Activated CD8-positive, alpha-beta T cell treated with anti-CD3 and anti-CD28 coated beads, Interleukin-2, amount 10 ng/mL, durations not matched to agents 7 days and 5 days (primary cell): ENCODE measurements at regions of chr3 and their contacts with region 1.

Region 1: DNA sequence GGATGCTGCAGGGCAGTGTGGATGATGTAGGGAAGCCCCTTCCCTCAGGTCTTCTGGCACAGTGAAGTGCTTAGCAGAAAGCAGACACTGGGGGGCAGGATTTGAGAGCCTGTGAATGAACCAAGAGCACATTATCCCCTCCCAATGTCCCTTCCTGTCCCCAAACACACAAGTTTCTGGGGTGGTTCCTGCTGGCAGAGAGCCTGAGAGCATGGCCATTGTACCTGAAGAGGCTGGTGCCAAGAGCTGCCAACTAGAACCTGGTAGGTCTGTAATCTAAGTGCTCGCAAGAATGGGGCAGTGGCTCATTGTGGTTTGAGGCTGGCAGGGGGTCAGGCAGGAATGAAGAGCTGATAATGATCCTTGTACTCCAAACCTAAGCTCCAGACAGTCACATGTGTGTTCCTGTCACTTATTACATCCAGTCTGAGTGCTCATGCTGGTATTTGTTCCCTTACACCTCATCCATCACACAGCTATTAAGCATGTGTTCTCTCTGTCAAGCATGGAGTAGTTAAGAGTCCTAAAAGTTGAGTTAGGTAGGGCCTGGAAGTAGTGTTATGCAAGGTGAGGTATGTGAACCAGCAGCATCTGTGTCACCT is 6.7 kb upstream of the CCR1 start:
- DNase-seq: peak; percentile 64
- ATAC-seq: peak; percentile 13
- H3K4me3 Mint-ChIP-seq: no peak overlapping the region
- H3K27ac Mint-ChIP-seq: no peak overlapping the region
- H3K4me1 Mint-ChIP-seq: peaks cover 32% of the 10 kb centered on the region
- H3K27me3 Mint-ChIP-seq: no peaks in the 10 kb centered on the region

Region 2: DNA sequence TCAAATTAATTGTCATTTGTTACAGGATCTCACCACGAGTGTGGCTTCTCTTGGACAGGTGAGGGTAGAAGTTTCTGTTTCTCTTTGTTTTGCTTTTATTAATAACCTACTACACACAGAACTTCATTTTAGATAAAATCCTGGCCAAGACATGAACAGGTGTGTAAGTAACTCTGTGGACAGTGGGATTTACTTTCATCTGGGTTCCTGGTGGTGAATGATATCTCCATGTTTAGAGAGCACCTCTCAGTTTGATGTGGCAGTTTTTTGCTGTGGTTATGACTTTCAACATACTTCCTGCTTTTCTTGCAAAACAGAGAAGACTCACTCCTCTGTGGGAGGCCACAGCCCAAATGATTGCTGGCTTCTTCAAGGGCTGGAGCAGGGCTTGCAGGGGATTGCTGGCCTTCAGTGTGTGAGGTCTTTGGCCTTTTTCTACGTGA is 116.5 kb before region 1 on chr3:
- CTCF ChIA-PET with region 1: interaction called, 150 read pairs
- POLR2A ChIA-PET with region 1: interaction called, 6 read pairs
- DNase-seq: peak; percentile 80
- ATAC-seq: peak; percentile 72
- H3K4me3 Mint-ChIP-seq: peak overlapping the region; percentile 63
- H3K27ac Mint-ChIP-seq: peak overlapping the region; percentile 99
- H3K4me1 Mint-ChIP-seq: peaks cover 92% of the 10 kb centered on the region
- H3K27me3 Mint-ChIP-seq: no peaks in the 10 kb centered on the region

Region 3: DNA sequence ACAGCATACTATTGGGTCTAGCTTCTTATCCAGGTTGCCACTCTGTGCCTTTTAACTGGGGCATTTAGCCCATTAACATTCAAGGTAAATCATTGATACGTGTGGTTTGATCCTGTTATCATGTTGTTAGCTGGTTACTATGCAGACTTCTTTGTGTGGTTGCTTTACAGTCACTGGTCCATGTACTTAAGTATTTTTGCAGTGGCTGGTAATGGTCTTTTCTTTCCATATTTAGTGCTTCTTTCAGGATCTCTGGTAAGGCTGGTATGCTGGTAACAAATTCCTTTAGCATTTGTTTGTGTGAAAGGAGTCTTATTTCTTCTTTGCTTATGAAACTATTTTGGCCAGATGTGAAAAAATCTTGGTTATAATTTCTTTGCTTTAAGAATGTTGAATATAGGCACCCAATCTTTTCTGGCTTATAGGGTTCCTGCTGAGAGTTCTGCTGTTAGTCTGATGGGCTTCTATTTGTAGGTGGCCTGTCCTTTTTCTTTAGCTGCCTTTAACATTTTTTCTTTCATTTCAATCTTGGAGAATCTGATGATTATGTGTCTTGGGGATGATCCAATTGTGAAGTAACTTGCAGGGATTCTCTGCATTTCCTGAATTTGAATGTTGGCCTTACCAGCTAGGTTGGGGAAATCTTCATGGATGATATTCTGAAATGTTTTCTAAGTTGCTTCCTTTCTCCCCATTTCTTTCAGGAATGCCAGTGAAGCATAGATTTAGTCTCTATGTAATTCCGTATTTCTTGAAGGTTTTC is 46.1 kb before region 1 on chr3:
- CTCF ChIA-PET with region 1: no interaction called
- POLR2A ChIA-PET with region 1: no interaction called
- DNase-seq: no peak
- ATAC-seq: no peak
- H3K4me3 Mint-ChIP-seq: no peak overlapping the region
- H3K27ac Mint-ChIP-seq: no peak overlapping the region
- H3K4me1 Mint-ChIP-seq: no peaks in the 10 kb centered on the region
- H3K27me3 Mint-ChIP-seq: peaks cover 29% of the 10 kb centered on the region

Region 4: DNA sequence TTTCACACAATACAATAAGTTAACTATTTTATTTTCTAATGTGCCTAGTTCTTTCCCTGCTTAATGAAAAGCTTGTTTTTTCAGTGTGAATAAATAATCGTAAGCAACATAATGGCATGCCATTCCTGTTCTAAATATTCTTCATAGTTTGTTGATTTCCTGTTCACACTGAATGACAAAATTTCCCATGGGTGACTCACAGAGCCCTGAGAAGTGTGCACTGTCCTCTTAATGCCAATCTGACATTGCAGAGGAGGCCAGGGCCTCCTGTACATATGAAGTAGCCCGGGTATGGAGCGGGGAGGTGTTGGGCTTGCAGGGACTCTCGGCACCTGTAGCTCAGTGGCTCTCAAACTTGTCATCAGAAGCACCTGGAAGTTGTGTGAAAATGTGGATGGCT is 51.7 kb after region 1 on chr3:
- CTCF ChIA-PET with region 1: interaction called, 11 read pairs
- POLR2A ChIA-PET with region 1: interaction called, 3 read pairs
- DNase-seq: no peak
- ATAC-seq: no peak
- H3K4me3 Mint-ChIP-seq: no peak overlapping the region
- H3K27ac Mint-ChIP-seq: no peak overlapping the region
- H3K4me1 Mint-ChIP-seq: peaks cover 51% of the 10 kb centered on the region
- H3K27me3 Mint-ChIP-seq: no peaks in the 10 kb centered on the region

Region 5: DNA sequence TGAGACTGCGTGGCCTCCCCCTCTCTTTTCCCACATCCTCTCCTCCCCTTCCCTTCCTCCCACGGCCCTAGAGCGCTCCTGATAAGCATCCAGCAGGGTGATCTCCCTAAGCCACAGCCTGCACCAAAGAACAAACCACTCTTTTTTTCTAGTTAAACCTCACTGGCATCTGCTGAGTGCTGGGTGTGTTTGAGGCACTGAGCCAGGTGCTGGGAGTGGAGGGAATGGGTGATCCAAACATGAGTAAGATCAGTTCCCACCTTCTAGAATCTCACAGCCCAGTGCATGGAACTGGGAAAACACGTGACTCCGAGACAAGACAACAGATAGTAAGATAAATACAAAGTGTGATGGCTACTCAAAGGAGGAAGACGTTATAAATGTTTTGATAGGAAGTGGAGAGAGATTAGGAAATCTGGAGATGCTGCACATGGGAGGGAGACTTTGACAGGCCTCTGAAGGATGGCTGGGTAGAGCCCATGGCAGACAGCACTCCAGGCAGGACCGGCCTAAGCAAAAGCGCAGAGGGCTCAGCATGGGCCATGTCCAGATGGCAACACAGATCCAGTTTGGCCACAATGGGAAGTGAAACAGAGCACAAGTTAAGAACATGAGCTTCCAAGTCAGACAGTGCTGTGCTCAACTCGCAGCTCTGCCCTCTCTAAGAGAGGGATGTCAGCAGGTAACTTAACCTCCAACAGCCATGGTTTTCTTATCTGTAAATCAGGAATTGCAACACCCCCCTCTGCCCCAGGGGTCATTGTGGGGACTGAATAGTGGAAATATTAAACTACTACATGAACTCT is 83.0 kb after region 1 on chr3:
- CTCF ChIA-PET with region 1: interaction called, 11 read pairs
- POLR2A ChIA-PET with region 1: interaction called, 3 read pairs
- DNase-seq: no peak
- ATAC-seq: no peak
- H3K4me3 Mint-ChIP-seq: no peak overlapping the region
- H3K27ac Mint-ChIP-seq: peak overlapping the region; percentile 92
- H3K4me1 Mint-ChIP-seq: peaks cover 93% of the 10 kb centered on the region
- H3K27me3 Mint-ChIP-seq: no peaks in the 10 kb centered on the region

Region 6: GRCh38 chr3:46378426-46378942 is 163.6 kb after region 1 on chr3:
- CTCF ChIA-PET with region 1: interaction called, 371 read pairs
- POLR2A ChIA-PET with region 1: no interaction called
- DNase-seq: peak; percentile 82
- ATAC-seq: peak; percentile 50
- H3K4me3 Mint-ChIP-seq: no peak overlapping the region
- H3K27ac Mint-ChIP-seq: no peak overlapping the region
- H3K4me1 Mint-ChIP-seq: peaks cover 76% of the 10 kb centered on the region
- H3K27me3 Mint-ChIP-seq: no peaks in the 10 kb centered on the region